ENCODE measurements at regions of chr13 and their contacts with region 1.

Region 1: GRCh38 chr13:25943658-25944057 is 108.2 kb downstream of the SHISA2 start:
- DNase-seq: no peak
- H3K4me3 ChIP-seq: no peak overlapping the region
- H3K27ac ChIP-seq: no peak overlapping the region
- H3K4me1 ChIP-seq: no peaks in the 10 kb centered on the region
- H3K27me3 ChIP-seq: no peaks in the 10 kb centered on the region
- CTCF ChIP-seq: no peak
- POLR2A ChIP-seq: no peak

Region 2: GRCh38 chr13:25923217-25924085 is 20.2 kb before region 1 on chr13:
- intact Hi-C with region 1: loop called (anchors 1 kb)
- DNase-seq: no peak
- H3K4me3 ChIP-seq: no peak overlapping the region
- H3K27ac ChIP-seq: no peak overlapping the region
- H3K4me1 ChIP-seq: no peaks in the 10 kb centered on the region
- H3K27me3 ChIP-seq: no peaks in the 10 kb centered on the region
- CTCF ChIP-seq: no peak
- POLR2A ChIP-seq: no peak

Region 3: DNA sequence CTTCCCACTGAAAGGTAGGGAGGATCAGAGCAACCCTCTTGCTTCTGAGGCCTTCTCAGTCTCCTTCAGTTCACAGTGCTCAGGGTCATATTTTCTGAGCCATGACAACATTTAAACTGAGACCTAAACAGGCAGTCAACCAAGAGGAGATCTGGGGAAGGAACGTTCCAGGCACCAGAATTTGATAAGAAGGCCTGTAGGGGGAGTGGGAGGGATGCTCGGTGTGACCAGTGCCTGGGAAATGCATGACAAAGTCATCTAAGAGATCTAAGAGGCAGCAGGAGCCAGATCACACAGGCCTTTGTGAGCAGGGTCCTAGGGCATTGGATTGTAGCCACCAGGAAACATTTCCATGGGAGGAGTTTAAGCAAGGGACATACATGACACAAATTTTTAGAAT is 36.6 kb after region 1 on chr13:
- intact Hi-C with region 1: no loop called
- DNase-seq: no peak
- H3K4me3 ChIP-seq: no peak overlapping the region
- H3K27ac ChIP-seq: no peak overlapping the region
- H3K4me1 ChIP-seq: no peaks in the 10 kb centered on the region
- H3K27me3 ChIP-seq: no peaks in the 10 kb centered on the region
- CTCF ChIP-seq: no peak
- POLR2A ChIP-seq: no peak

Measured in breast epithelium (tissue), 4 donors.